ENCODE measurements at regions of chr11 and their contacts with region 1.

Region 1: DNA sequence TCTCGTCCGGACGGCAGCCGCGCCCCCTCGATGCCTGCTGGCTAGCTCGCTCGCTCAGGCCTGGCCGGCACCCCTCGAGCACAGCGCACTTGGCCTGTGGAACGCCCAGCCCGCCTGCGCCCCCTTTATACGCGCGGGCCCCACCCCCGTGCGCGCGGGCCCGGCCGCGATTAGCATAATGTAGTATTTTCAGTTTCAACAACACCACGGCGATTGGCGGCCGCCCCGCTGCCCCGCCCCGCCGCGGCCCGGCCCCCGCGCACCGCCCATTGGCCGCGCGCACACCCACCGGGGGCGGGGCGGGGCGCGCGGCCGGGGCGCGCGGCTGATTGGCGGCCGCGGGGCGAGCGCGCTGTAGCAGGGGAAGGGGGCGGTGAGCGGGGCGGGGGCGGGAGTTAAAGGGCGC is at the start of gene CDKN1C:
- DNase-seq: peak; percentile 73 to 98 (median 82)

Region 2: GRCh38 chr11:2428322-2428795 is 457.3 kb before region 1 on chr11:
- intact Hi-C with region 1: loop called (anchors 1 kb)
- DNase-seq: peak in 6 of 10 donors; percentile 56 to 91 (median 68)

Region 3: GRCh38 chr11:2532704-2533586 is 352.7 kb before region 1 on chr11:
- intact Hi-C with region 1: loop called (anchors 1 kb)
- DNase-seq: peak; percentile 81 to 99 (median 92)